Heart left ventricle (tissue), 16 donors: ENCODE measurements at regions of chr9 and their contacts with region 1.

Region 1: GRCh38 chr9:14400658-14400995 is 86.7 kb upstream of the NFIB start:
- DNase-seq: peak in 4 of 5 donors; percentile 41 to 62 (median 50)
- ATAC-seq: peak; percentile 43 to 90 (median 86)
- H3K4me3 ChIP-seq: peak overlapping the region in 8 of 12 donors; percentile 8 to 38 (median 20)
- H3K27ac ChIP-seq: peak overlapping the region in 3 of 12 donors; percentile 5 to 24 (median 16)
- H3K4me1 ChIP-seq: peaks cover 0 to 22% (median 7%) of the 10 kb centered on the region in 12 donors
- H3K27me3 ChIP-seq: no peaks in the 10 kb centered on the region
- CTCF ChIP-seq: peak; percentile 12 to 78 (median 67)
- POLR2A ChIP-seq: no peak

Region 2: GRCh38 chr9:13364271-13365000 is 1036.2 kb before region 1 on chr9:
- intact Hi-C with region 1: loop called in 4 of 10 experiments (anchors 10 kb)
- DNase-seq: no peak
- ATAC-seq: no peak
- H3K4me3 ChIP-seq: no peak overlapping the region
- H3K27ac ChIP-seq: no peak overlapping the region
- H3K4me1 ChIP-seq: peaks cover 0 to 15% (median 0%) of the 10 kb centered on the region in 12 donors
- H3K27me3 ChIP-seq: no peaks in the 10 kb centered on the region
- CTCF ChIP-seq: no peak
- POLR2A ChIP-seq: no peak

Region 3: GRCh38 chr9:14198841-14199455 is 201.7 kb before region 1 on chr9:
- intact Hi-C with region 1: no loop called
- DNase-seq: peak; percentile 74 to 83 (median 78)
- ATAC-seq: peak; percentile 74 to 91 (median 86)
- H3K4me3 ChIP-seq: peak overlapping the region in 6 of 12 donors; percentile 1 to 32 (median 8)
- H3K27ac ChIP-seq: peak overlapping the region; percentile 21 to 83 (median 68)
- H3K4me1 ChIP-seq: peaks cover 16 to 98% (median 77%) of the 10 kb centered on the region in 12 donors
- H3K27me3 ChIP-seq: no peaks in the 10 kb centered on the region
- CTCF ChIP-seq: no peak
- POLR2A ChIP-seq: no peak

Region 4: GRCh38 chr9:14314424-14314928 is 86.2 kb before region 1 on chr9:
- intact Hi-C with region 1: no loop called
- DNase-seq: peak; percentile 74 to 89 (median 83)
- ATAC-seq: peak; percentile 45 to 59 (median 56)
- H3K4me3 ChIP-seq: peak overlapping the region; percentile 66 to 90 (median 82)
- H3K27ac ChIP-seq: peak overlapping the region; percentile 93 to 100 (median 99)
- H3K4me1 ChIP-seq: peaks cover 5 to 48% (median 29%) of the 10 kb centered on the region in 12 donors
- H3K27me3 ChIP-seq: peaks cover 0 to 47% (median 0%) of the 10 kb centered on the region in 9 donors
- CTCF ChIP-seq: no peak
- POLR2A ChIP-seq: peak in 1 of 2 donors; percentile 76

Region 5: DNA sequence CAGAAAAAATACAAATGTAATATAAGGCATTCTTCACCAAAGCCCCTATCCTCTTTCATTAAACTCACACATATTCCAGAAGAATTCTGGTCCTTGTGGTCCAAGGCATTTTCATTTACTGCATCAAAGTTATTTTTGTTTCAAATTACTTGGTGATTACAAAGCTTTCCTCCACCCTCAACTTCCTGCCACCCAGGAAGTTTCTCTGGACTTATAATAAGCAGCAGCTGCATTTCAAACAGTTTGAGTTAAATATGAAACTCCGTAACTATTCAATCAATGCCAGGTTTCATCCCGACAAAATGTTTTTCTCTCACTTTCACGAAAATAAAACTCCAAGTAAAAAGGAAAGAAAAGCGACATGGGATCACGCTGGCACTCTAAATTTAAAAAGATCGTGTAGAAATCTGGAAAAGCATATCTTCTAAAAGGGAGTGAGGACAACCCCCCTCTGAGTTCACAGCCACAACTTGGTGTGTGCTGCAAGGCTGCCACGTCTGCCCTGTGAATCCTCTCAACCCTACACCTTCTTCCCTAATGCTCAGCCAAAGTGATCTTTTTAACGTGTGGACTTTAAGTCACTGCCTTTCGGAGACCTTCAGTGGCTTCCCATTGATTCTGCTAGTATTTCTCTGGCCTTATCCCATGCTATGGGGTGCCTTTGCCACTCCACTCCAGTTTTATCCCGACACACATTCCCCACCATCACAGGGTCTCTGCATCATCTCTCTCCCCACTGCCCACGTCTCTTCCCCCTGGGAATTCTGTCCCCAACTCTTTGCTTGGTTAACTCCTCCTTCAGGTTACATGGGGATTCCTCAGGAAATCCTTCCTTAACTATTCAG is 412.9 kb after region 1 on chr9:
- intact Hi-C with region 1: no loop called
- DNase-seq: no peak
- ATAC-seq: peak in 1 of 4 donors; percentile 26
- H3K4me3 ChIP-seq: peak overlapping the region in 3 of 12 donors; percentile 3 to 37 (median 34)
- H3K27ac ChIP-seq: peak overlapping the region in 4 of 12 donors; percentile 2 to 52 (median 24)
- H3K4me1 ChIP-seq: no peaks in the 10 kb centered on the region
- H3K27me3 ChIP-seq: no peaks in the 10 kb centered on the region
- CTCF ChIP-seq: no peak
- POLR2A ChIP-seq: no peak